ENCODE measurements at regions of chr18 and their contacts with region 1.

Region 1: DNA sequence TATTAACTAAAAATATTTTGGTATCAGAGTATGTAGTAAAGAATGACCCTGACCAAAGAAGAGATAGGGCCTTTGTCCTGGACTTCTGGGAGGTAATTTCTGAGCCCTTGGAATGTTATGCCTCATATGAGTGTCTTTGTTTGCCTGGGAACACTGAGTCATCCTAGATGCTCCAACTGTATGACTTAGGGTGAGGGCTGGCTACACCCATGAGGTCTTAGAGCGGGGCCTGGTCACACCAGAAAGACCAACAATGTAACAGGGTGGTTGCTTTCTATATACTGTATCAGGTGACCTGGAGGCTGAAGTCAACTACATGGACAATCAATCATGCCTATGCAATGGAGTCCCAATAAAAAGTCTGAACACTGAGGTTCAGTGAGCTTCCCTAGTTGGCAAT is 253.1 kb downstream of the MBD2 start:
- DNase-seq: no peak
- H3K4me3 ChIP-seq: no peak overlapping the region
- H3K27me3 ChIP-seq: no peaks in the 10 kb centered on the region
- CTCF ChIP-seq: no peak

Region 2: GRCh38 chr18:54004830-54005229 is 33.5 kb after region 1 on chr18:
- CTCF ChIA-PET with region 1: no interaction called
- POLR2A ChIA-PET with region 1: no interaction called
- DNase-seq: no peak
- H3K4me3 ChIP-seq: no peak overlapping the region
- H3K27me3 ChIP-seq: no peaks in the 10 kb centered on the region
- CTCF ChIP-seq: no peak

Region 3: DNA sequence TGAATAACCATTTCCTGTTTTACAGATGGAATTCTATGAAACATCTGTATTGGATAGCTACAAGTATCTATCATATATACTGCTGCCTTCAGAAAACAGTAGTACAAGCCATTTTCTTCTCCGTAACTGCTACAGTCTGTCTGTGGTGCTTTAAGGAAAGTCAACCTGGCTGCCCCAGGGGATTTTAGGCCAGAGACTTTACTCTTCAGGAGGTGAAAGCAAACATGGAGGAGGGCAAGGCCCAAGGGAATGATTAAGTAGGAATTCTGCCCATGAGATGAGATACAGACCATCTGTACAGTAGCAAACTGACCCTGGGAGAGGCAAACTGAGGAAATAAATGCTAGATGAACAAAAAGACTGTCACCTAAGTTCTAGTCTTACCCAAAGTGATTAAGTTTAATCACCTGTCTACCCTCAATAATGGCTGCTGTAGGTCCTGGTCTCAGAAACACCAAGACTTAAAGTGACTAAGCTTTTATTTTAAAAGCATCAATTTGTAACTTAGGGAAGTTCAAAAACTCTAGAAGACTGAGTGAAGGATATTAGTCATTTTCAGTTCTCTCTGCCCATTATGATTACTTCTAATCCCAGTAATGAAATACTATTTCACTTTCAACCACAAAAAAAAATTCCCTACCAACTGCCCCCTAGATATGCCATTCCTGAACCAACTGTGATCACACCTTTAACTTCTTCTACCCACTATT is 238.3 kb after region 1 on chr18:
- CTCF ChIA-PET with region 1: no interaction called
- POLR2A ChIA-PET with region 1: interaction called, 21 read pairs
- DNase-seq: no peak
- H3K4me3 ChIP-seq: no peak overlapping the region
- H3K27me3 ChIP-seq: no peaks in the 10 kb centered on the region
- CTCF ChIP-seq: no peak

Region 4: DNA sequence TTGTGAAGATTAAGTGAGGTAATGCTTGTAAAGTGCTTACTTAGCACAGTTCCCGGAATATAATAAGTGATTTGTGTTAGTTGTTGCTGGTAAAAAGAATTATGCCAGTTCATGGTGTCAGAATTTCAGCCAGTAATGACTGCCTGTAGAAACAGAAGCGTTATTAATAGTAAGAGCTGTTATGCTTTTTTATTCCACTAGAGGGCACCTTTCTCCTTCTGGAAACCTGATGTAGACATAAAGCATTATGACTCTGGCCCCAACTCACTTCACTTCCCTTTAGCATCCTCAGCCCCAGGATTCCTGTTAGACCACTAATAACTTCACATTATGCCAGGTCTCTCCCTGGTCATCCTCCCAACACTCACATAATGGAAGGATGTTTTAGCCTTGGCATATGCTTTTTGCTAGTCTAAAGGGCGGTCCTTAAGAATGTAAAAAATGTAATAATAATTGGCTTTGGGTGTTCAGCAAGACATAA is 421.3 kb after region 1 on chr18:
- CTCF ChIA-PET with region 1: no interaction called
- POLR2A ChIA-PET with region 1: no interaction called
- DNase-seq: no peak
- H3K4me3 ChIP-seq: no peak overlapping the region
- H3K27me3 ChIP-seq: no peaks in the 10 kb centered on the region
- CTCF ChIP-seq: peak; percentile 69

Measured in BJ (cell line).